Mammary epithelial cell (primary cell): ENCODE measurements at regions of chr9 and their contacts with region 1.

Region 1: GRCh38 chr9:124126571-124127289 is 115.2 kb downstream of the LHX2 start:
- DNase-seq: peak; percentile 54
- H3K4me3 ChIP-seq: no peak overlapping the region
- H3K27ac ChIP-seq: no peak overlapping the region
- H3K4me1 ChIP-seq: no peaks in the 10 kb centered on the region
- H3K27me3 ChIP-seq: no peaks in the 10 kb centered on the region
- CTCF ChIP-seq: peak; percentile 95 to 98

Region 2: DNA sequence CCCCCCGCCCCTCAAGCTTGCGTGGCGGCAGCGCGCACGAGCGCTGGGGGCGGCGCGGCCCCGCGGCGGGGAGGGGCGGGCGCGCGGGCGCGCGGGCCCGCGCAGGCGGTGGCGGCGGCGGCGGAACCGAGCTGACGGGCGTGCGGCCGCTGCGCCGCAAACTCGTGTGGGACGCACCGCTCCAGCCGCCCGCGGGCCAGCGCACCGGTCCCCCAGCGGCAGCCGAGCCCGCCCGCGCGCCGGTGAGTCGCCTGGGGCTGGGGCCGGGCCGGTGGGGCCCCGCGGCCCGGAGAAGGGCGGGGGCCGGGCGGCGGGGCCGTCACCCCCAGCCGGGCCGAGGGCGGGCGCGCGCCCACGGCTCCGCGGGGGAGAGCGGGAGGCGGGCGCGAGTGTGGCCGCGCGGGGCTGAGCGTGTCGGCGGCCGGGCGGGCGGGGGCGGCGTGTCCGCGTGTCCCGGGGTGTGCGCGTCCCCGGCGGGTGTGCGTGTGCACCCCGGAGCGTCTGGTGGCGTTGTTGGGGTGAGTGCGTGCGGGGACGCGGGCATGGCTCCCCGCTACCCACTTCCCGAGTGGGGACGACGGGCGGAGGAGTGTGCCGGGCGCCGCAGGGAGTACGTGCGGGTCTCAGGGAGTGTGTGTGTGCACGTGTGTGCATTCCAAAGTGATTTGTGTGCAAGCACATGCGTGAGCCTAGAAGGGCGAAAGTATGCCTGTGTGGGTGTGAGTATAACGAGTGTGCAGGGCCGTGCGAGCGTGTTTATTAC is 131.3 kb after region 1 on chr9 and contains the start of gene NEK6:
- CTCF ChIA-PET with region 1: no interaction called
- dilution Hi-C with region 1: no loop called
- in situ Hi-C with region 1: no loop called
- intact Hi-C with region 1: loop called (anchors 2 kb)
- DNase-seq: peak; percentile 47
- H3K4me3 ChIP-seq: peak within 1 kb of the TSS; percentile 76 to 87 (median 81)
- H3K27ac ChIP-seq: peak within 1 kb of the TSS; percentile 77
- H3K4me1 ChIP-seq: peaks cover 37% of the 10 kb centered on the region
- H3K27me3 ChIP-seq: no peaks in the 10 kb centered on the region
- CTCF ChIP-seq: no peak
- total RNA-seq, gene NEK6: 41.3 to 41.7 TPM

Region 3: DNA sequence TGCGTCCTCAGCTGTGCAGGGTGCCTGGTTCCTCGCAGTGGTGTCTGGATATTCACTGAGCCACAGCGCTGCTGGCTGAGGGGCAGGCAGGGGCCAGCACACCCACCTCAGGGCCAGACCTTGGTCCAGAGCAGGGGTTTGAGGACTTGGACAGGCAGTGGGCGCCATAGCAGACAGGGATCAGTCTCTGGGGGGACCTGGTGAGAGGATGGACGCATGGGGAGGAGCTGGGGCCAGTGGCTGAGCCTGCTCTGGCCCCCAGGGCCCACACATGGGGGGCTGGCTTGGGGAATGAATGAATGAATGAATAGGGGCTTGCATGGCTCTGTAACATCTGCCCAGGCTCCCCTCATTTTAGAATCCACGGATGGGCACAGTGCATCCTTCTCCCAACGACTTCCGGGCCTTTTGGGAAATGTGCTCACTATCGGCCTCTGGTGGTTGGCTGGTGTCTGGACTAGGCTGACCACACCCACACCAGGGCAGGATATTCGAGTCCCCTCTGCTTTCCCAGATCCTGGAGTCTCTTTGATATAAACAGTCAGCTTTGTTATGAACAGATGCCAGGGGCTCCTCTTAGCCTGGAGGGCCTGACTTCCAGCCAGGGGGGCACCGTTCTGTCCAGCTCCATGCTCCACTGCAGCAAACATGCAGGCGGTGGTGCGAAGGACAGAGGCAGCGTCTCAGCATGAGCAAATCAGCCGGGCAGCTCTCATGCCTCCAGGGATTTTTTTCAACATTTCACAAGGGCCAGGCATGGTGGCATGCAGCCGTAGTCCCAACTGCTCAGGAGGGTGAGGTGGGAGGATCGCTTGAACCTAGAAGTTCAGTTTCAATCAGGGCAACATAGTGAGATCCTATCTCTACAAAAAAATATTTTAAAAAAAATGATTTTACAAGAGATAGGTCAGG is 193.6 kb after region 1 on chr9:
- CTCF ChIA-PET with region 1: no interaction called
- dilution Hi-C with region 1: no loop called
- in situ Hi-C with region 1: loop called (anchors 5 to 10 kb)
- intact Hi-C with region 1: loop called (anchors 1 kb)
- DNase-seq: peak; percentile 30
- H3K4me3 ChIP-seq: no peak overlapping the region
- H3K27ac ChIP-seq: no peak overlapping the region
- H3K4me1 ChIP-seq: no peaks in the 10 kb centered on the region
- H3K27me3 ChIP-seq: no peaks in the 10 kb centered on the region
- CTCF ChIP-seq: peak; percentile 95 to 97

Region 4: DNA sequence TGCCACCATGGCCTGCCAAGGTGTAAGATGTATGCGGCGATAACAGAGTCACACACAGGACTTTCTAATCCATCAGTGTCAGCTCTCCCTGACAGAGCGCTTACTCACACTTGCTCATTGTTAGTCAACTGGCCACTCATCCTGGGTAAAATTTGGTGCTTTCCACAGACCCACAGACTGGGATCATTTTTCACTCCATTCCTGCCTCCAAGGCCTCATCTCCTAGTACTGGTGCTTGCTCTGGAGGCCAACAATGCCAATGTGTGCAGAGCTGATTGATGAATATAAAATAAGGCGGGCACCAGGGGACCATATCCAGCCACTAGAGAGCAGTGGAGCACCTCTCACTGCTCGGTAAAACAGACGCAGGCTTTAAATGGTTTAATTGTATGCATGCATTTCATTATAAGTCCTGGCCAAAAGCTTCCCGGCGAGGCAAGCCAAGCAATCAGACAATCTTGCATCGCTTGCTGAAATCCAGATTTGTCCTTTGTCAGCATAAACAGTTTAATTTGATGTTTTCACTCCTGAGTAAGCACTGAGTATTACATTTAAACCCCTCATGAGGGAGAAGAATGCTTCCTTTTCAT is 266.2 kb after region 1 on chr9:
- CTCF ChIA-PET with region 1: interaction called, 3 read pairs
- dilution Hi-C with region 1: no loop called
- in situ Hi-C with region 1: no loop called
- intact Hi-C with region 1: loop called (anchors 2 kb)
- DNase-seq: peak; percentile 99
- H3K4me3 ChIP-seq: no peak overlapping the region
- H3K27ac ChIP-seq: peak overlapping the region; percentile 43
- H3K4me1 ChIP-seq: peaks cover 32% of the 10 kb centered on the region
- H3K27me3 ChIP-seq: no peaks in the 10 kb centered on the region
- CTCF ChIP-seq: peak; percentile 53 to 57